ENCODE measurements at regions of chr5 and their contacts with region 1.

Region 1: GRCh38 chr5:112551419-112552032 is 132.4 kb upstream of the EPB41L4A start:
- DNase-seq: no peak
- ATAC-seq: peak in 3 of 4 donors; percentile 64 to 91 (median 69)
- H3K4me3 ChIP-seq: no peak overlapping the region
- H3K27ac ChIP-seq: no peak overlapping the region
- H3K4me1 ChIP-seq: no peaks in the 10 kb centered on the region
- H3K27me3 ChIP-seq: no peaks in the 10 kb centered on the region
- CTCF ChIP-seq: peak; percentile 78

Region 2: GRCh38 chr5:112757468-112758208 is 206.1 kb after region 1 on chr5:
- intact Hi-C with region 1: loop called (anchors 1 to 2 kb)
- DNase-seq: no peak
- ATAC-seq: peak; percentile 68 to 96 (median 78)
- H3K4me3 ChIP-seq: no peak overlapping the region
- H3K27ac ChIP-seq: peak overlapping the region; percentile 31
- H3K4me1 ChIP-seq: peaks cover 3% of the 10 kb centered on the region
- H3K27me3 ChIP-seq: no peaks in the 10 kb centered on the region
- CTCF ChIP-seq: peak; percentile 87

Region 3: DNA sequence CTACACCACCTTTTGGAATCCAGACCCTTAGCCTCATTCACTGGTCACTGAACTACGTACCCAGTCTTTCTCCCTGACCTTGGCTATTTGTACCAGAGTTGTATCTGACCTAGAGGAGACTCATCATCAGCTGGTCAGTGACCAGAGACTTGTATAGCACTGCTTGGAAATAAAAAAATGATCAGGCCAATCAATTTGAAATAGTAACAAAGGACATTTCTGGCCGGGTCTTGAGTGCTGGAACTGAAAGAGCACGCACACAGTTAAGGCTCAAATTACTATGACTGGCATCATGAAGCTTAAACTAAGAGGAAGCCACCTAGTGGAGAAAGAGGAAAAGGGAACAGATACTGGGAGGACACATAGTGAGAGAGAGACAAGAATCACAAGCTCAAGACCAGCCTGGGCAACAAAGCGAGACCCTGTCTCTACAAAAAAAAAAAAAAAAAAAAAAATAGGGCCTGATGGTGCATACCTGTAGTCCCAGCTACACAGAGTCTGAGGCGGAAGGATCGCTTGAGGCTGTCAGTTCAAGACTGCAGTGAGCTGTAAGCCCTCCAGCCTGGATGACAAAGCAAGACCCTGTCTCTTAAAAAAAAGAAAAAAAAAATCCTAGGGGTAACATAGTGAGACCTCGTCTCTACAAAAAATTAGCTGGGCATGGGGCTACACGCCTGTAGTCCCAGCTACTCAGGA is 296.7 kb after region 1 on chr5:
- intact Hi-C with region 1: loop called in 1 of 2 experiments (anchors 5 kb)
- DNase-seq: no peak
- ATAC-seq: peak; percentile 85 to 98 (median 96)
- H3K4me3 ChIP-seq: peak overlapping the region; percentile 24
- H3K27ac ChIP-seq: peak overlapping the region; percentile 7
- H3K4me1 ChIP-seq: no peaks in the 10 kb centered on the region
- H3K27me3 ChIP-seq: no peaks in the 10 kb centered on the region
- CTCF ChIP-seq: peak; percentile 64

Region 4: DNA sequence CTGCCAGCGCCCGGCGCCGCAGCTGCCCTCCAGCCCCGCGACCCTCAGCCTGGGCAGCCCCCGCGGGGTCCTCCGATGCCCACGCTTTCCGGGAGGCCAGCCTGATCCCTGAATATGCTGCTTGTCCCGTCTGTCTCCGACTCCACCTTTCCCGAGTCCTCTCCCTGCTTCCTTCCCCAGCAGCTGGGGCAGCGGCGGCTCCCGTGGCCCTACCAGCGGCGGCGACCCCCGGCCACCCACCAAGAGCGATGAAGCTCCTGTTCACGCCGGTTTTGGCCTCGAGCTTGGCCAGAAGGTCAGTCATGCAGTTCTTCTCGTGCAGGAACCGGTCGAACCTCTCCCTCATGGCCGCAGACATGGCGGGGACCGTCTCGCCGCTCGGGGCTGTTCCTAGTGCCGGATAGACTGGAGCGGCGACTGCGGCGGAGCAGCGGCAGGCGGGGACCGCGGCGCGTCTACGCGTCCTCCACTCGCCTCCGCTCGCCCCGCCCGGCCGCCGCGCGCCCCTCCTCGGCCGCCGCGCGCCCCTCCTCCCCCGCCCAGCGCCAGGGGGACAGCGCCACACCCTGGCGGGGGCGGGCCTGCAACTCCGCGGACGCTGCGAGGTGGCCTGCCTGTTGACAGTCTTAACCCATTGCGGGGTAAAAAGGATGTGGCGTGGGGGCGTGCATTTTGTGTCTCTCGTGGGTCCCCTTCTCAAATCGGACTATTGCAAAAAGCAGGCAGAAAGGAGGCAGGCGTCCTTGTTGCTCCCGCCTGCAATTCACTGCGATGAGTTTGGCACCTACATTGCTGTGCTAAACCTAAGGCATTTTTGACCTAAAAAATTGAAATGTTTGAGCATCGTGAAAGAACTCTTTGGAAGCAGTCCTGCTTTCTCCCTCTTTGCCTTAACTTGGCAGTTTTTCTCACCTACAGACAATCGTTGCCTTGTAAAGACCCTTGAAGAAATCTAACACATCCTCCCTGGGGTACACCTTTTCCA is 370.6 kb after region 1 on chr5 and contains the start of gene REEP5:
- intact Hi-C with region 1: loop called in 1 of 2 experiments (anchors 10 kb)
- DNase-seq: peak; percentile 90 to 93
- ATAC-seq: peak; percentile 92 to 95 (median 94)
- H3K4me3 ChIP-seq: peak within 1 kb of the TSS; percentile 99
- H3K27ac ChIP-seq: peak within 1 kb of the TSS; percentile 99
- H3K4me1 ChIP-seq: peaks cover 29% of the 10 kb centered on the region
- H3K27me3 ChIP-seq: no peaks in the 10 kb centered on the region
- CTCF ChIP-seq: peak; percentile 88
- total RNA-seq, gene REEP5: 66.1 to 83.6 (median 80.2) TPM

Region 5: DNA sequence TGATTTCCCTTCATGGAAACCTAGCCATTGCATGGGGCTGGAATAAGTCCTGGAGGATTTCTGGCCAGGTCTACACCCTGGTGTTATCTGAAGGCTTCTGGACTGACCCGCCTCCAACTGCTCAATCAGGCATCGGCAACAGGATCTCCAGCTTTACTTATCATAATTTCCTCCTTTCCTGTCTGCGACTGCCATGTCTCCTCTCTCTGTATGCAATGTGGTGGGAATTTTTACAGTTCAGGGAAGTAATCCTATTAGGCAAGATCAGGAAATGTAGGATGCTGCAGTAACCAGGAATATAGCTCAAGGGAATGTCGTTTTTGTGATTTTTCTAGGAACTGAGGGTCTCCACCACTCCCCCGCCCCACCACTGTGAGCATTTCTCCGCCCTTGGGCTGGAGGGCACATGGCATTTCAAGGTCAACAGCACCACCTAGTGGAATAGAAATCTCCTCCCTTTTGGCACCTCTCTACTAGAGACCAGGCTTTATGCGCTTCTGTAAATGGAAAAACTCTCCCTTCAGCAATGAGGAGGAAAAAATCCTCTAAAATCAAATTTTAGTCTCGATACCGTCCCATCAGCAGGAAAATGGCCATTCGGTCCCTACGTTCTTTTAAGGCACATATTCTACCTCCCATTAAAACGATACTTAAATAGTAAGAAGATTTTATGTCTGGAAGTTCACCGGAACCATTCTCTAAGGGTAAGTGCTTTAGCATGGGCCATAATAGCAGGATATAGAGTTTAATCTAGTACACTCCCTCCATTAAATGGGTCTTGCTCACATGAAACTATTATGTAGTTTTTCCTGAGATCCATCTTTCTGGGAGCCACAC is 1055.0 kb after region 1 on chr5:
- intact Hi-C with region 1: loop called in 1 of 2 experiments (anchors 10 kb)
- DNase-seq: no peak
- ATAC-seq: peak; percentile 73 to 88 (median 80)
- H3K4me3 ChIP-seq: no peak overlapping the region
- H3K27ac ChIP-seq: no peak overlapping the region
- H3K4me1 ChIP-seq: no peaks in the 10 kb centered on the region
- H3K27me3 ChIP-seq: no peaks in the 10 kb centered on the region
- CTCF ChIP-seq: peak; percentile 72

Measured in psoas muscle (tissue), 8 donors.